Posterior vena cava (tissue), 2 donors: ENCODE measurements at regions of chr2 and their contacts with region 1.

Region 1: DNA sequence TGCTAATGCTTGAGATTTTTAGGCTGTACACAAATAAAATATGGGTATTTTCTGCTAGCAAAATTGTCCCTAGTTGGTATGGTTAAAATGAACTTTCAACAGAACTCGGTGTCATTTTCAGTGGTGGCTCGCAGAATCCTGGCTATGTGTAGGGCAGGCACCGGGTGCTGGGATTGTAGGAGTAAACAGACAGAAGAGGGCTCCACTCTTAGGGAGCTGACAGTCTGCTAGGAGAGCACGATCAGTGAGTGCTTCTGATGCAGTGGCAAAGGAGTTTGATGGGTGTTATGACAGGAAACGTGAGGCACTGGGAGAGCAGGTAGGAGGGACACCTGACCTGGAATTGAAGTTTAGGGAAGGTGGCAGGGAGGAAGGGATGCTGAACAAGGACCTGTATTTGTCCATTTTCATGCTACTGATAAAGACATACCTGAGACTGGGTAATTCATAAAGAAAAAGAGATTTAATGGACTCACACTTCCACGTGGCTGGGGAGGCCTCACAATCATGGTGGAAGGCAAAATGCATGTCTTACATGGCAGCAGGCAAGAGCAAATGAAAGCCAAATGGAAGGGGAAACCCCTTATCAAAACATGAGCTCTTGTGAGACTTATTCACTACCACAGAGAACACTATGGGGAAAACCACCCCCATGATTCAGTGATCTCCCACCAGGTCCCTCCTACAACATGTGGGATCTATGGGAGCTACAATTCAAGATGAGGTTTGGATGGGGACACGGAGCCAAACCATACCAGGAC is 105.4 kb upstream of the LCLAT1 start:
- DNase-seq: no peak

Region 2: DNA sequence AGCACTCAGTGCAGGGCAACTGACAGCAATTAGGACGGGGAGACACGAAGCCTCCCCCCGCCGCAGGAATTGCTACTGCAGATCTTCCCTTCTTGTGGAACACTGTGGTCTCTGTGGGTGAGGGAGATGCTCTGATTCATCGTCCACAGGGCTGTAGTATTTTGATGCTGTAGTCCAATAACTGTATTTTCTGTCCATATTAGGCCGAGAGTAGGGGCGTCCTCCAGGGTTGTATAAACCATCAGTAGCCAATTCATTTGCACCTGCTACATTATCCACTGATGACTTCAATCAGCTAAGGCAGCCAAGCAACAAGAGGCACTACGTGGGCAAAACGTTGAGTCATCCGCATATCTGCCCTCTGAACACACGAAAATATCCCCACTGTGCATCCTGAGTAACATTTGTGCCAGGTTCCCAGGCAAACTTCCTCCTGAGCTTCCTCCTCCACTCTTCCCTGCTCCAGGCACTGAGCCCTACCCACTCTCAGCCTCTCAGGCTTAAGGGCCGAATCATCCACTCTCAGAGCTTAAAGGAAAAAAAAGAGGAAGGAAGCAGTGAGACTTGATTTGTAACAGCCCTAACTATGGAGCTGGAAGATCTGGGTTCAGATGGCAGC is 48.3 kb before region 1 on chr2:
- intact Hi-C with region 1: no loop called
- DNase-seq: no peak

Region 3: GRCh38 chr2:30433541-30434299 is 92.0 kb after region 1 on chr2:
- intact Hi-C with region 1: loop called in 1 of 2 experiments (anchors 5 kb)
- DNase-seq: no peak